ENCODE measurements at regions of chr5 and their contacts with region 1.

Region 1: DNA sequence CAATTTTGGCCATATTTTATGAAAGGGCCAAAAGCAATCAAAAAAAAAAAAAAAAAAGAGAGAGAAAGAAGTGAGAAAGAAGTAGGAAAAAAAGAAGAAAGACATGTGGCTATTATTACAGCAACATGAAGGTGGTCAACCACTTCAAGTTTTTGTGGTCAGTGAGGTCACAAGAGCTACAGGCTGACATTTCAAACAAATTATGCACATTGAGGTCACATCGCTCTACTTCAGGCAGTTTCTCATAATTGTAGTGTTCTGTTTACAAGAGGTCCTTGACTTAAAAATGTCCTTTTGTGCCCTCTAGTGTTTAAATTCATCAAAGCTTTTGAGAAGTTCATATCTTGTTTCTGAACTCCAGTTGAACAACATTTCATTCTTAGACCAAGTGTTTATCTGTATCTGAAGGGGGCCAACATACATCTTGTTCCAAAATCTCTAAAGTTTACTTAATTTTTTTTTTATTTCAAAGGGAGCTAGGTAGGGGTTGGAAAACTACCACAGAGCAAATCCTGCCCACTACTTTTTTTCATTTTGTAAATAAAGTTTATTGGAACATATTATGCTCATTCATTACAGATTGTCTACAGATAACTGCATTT is 513.1 kb downstream of the PDE4D start:
- DNase-seq: no peak
- H3K4me3 Mint-ChIP-seq: no peak overlapping the region
- H3K27ac Mint-ChIP-seq: no peak overlapping the region
- H3K4me1 Mint-ChIP-seq: peaks cover 4% of the 10 kb centered on the region
- H3K27me3 Mint-ChIP-seq: peaks cover 10% of the 10 kb centered on the region

Region 2: DNA sequence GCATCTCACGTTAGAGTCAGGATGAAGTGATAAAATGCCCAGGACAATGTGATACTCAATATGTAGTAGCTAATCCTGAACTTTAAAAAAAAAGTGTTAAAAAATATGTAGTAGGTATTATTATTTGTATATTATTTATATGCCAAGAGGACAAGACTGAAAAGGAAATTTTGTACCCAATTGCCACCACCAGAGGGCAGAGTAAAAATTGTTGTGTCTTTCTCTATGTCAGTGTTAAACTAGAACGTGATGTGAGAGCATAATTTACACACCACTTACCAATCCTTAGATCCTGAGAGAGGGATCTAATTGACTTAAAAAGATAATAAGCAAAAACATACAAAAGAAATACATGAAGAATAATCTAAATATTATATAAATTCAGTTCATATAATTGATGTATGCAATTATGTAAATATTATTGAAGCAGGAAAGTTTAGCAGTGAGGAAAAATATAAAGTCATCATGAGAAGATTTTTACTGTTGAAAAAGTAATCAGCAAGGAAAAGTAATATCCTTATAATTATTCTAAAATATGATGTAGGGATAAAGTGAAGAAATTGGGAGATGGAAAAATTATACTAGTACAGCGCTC is 508.7 kb before region 1 on chr5:
- intact Hi-C with region 1: loop called (anchors 5 kb)
- DNase-seq: no peak
- H3K4me3 Mint-ChIP-seq: no peak overlapping the region
- H3K27ac Mint-ChIP-seq: no peak overlapping the region
- H3K4me1 Mint-ChIP-seq: no peaks in the 10 kb centered on the region
- H3K27me3 Mint-ChIP-seq: peaks cover 22% of the 10 kb centered on the region

Measured in activated T-helper 1 cell treated with anti-CD3 and anti-CD28 coated beads, Interleukin-12 subunit alpha, Interleukin-12 subunit beta, Interleukin-2, Interleukin-4 antibody, amounts not matched to agents 30 ng/mL and 10 ng/mL and 1 ng/mL, durations not matched to agents 14 hours and 24 hours and 36 hours (primary cell).